Activated T-helper 1 cell treated with anti-CD3 and anti-CD28 coated beads, Interleukin-12 subunit alpha, Interleukin-12 subunit beta, Interleukin-2, Interleukin-4 antibody, amounts not matched to agents 30 ng/mL and 10 ng/mL and 1 ng/mL, durations not matched to agents 14 hours and 24 hours and 36 hours (primary cell): ENCODE measurements at regions of chr18 and their contacts with region 1.

Region 1: GRCh38 chr18:54983041-54983686 is 23.9 kb upstream of the CCDC68 start:
- DNase-seq: no peak
- H3K4me3 Mint-ChIP-seq: no peak overlapping the region
- H3K27ac Mint-ChIP-seq: no peak overlapping the region
- H3K4me1 Mint-ChIP-seq: no peaks in the 10 kb centered on the region
- H3K27me3 Mint-ChIP-seq: peaks cover 7% of the 10 kb centered on the region

Region 2: DNA sequence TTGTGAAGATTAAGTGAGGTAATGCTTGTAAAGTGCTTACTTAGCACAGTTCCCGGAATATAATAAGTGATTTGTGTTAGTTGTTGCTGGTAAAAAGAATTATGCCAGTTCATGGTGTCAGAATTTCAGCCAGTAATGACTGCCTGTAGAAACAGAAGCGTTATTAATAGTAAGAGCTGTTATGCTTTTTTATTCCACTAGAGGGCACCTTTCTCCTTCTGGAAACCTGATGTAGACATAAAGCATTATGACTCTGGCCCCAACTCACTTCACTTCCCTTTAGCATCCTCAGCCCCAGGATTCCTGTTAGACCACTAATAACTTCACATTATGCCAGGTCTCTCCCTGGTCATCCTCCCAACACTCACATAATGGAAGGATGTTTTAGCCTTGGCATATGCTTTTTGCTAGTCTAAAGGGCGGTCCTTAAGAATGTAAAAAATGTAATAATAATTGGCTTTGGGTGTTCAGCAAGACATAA is 590.6 kb before region 1 on chr18:
- intact Hi-C with region 1: loop called (anchors 1 kb)
- DNase-seq: no peak
- H3K4me3 Mint-ChIP-seq: no peak overlapping the region
- H3K27ac Mint-ChIP-seq: no peak overlapping the region
- H3K4me1 Mint-ChIP-seq: peaks cover 43% of the 10 kb centered on the region
- H3K27me3 Mint-ChIP-seq: peaks cover 3% of the 10 kb centered on the region

Region 3: DNA sequence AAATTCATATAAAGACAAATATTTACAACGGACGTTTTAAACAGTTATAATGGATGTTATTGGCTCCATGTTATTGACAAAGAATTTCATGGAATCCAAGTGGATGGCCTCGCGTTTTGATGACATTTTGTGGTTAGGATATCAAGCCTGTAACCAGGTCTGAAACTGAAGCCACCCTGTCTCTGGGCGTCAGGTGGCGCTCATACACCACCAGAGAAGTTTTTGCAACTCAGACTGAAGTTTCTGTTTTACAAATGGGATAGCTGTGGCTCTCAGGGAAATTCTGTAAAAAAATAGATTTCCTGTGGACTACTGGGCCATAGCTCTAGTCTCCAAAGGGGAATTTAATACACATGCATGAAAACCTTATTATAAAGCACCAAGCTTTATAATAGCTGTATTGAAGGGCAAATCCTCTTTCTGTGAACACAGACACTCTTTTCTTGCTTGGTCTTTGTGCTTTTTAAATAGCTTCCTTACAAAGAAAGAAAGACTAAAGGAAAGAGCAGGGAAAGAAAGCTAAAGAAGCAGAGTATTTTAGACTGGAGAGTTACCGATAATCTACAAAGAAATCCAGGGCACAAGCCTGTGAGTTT is 538.7 kb before region 1 on chr18:
- intact Hi-C with region 1: loop called (anchors 1 kb)
- DNase-seq: no peak
- H3K4me3 Mint-ChIP-seq: no peak overlapping the region
- H3K27ac Mint-ChIP-seq: no peak overlapping the region
- H3K4me1 Mint-ChIP-seq: no peaks in the 10 kb centered on the region
- H3K27me3 Mint-ChIP-seq: peaks cover 9% of the 10 kb centered on the region

Region 4: GRCh38 chr18:54558609-54559585 is 424.3 kb before region 1 on chr18:
- intact Hi-C with region 1: loop called (anchors 1 kb)
- DNase-seq: no peak
- H3K4me3 Mint-ChIP-seq: no peak overlapping the region
- H3K27ac Mint-ChIP-seq: no peak overlapping the region
- H3K4me1 Mint-ChIP-seq: no peaks in the 10 kb centered on the region
- H3K27me3 Mint-ChIP-seq: no peaks in the 10 kb centered on the region

Region 5: GRCh38 chr18:54679318-54680149 is 303.6 kb before region 1 on chr18:
- intact Hi-C with region 1: loop called (anchors 1 kb)
- DNase-seq: no peak
- H3K4me3 Mint-ChIP-seq: no peak overlapping the region
- H3K27ac Mint-ChIP-seq: no peak overlapping the region
- H3K4me1 Mint-ChIP-seq: no peaks in the 10 kb centered on the region
- H3K27me3 Mint-ChIP-seq: peaks cover 11% of the 10 kb centered on the region